GM12878 (cell line): ENCODE measurements at regions of chr16 and their contacts with region 1.

Region 1: DNA sequence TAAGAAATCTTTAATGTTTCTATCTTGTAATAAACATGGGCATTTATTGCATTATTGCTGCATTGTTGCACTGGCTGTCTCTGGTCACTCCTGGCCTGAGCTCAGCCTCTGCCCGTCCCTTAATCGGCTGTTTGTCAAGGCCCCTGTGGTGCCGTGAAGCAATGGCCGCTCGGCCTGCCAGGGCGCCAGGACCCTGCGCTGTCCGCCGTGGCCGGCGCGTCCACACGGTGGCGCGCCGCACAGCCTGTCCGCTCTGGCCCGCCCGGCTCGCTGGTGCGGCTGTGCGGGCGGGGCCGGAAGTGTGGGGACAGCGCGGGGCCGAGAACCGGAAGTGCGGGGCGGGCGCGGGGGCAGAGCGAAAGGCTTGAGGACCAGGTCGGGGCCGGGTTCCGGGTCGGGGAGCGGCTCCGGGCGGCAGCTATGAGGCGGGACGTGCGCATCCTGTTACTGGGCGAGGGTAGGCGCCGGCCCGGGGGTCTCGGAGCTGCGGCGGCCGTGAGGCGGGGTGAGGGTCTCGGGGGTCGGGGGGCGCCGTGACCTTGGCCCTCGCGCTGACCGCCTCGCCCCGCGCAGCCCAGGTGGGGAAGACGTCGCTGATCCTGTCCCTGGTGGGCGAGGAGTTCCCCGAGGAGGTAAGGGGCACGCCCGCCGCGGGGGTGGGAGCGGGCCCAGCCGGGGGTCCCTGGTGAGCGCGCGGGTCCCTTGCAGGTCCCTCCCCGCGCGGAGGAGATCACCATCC is at the start of gene RHOT2:
- DNase-seq: peak; percentile 48
- ATAC-seq: peak; percentile 99
- H3K4me3 ChIP-seq: peak within 1 kb of the TSS; percentile 90
- H3K27ac ChIP-seq: peak within 1 kb of the TSS; percentile 73
- H3K4me1 ChIP-seq: peaks cover 2% of the 10 kb centered on the region; the same call in 1 of the 2 replicates
- H3K27me3 ChIP-seq: no peaks in the 10 kb centered on the region
- CTCF ChIP-seq: peak; percentile 72 to 95 (median 93); a peak in 5 of 6 replicates
- EP300 ChIP-seq: no peak; a peak in 1 of 4 replicates
- POLR2A ChIP-seq: peak; percentile 95
- RAD21 ChIP-seq: no peak
- polyA plus RNA-seq, gene RHOT2: 3.7 to 5.6 TPM

Region 2: GRCh38 chr16:391885-392335 is 276.0 kb before region 1 on chr16:
- CTCF ChIA-PET with region 1: no interaction called
- POLR2A ChIA-PET with region 1: no interaction called
- RAD21 ChIA-PET with region 1: no interaction called
- SMC1A ChIA-PET with region 1: no interaction called
- in situ Hi-C with region 1: loop called (anchors 10 kb)
- intact Hi-C with region 1: loop called (anchors 10 kb)
- DNase-seq: no peak
- ATAC-seq: peak; percentile 91
- H3K4me3 ChIP-seq: no peak overlapping the region
- H3K27ac ChIP-seq: no peak overlapping the region
- H3K4me1 ChIP-seq: peaks cover 8% of the 10 kb centered on the region; the same call in 1 of the 2 replicates
- H3K27me3 ChIP-seq: no peaks in the 10 kb centered on the region
- CTCF ChIP-seq: peak; percentile 66 to 85 (median 82)
- EP300 ChIP-seq: no peak
- POLR2A ChIP-seq: no peak
- RAD21 ChIP-seq: peak; percentile 77

Region 3: DNA sequence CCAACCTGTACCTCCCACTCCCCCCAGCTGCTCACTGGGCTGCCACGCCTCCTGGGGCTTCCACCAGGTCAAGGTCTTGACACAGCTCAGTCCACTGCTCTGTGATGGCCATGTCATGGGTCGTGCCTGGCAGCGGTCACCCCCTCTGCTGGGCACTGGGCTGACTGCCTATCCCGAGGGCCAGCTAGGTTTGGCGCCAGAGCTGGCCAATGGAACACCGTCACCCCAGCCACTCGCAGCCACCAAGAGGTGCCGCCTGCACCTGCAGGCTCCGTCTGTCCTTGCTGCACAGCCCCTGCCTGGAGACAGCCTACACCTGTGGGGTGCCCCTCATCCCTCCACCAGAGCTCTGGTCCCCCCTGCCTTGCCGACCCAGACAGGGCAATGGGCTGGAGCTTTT is 82.6 kb before region 1 on chr16:
- CTCF ChIA-PET with region 1: no interaction called
- POLR2A ChIA-PET with region 1: no interaction called
- RAD21 ChIA-PET with region 1: no interaction called
- SMC1A ChIA-PET with region 1: no interaction called
- in situ Hi-C with region 1: no loop called
- intact Hi-C with region 1: no loop called
- DNase-seq: no peak
- ATAC-seq: no peak
- H3K4me3 ChIP-seq: no peak overlapping the region
- H3K27ac ChIP-seq: no peak overlapping the region
- H3K4me1 ChIP-seq: peaks cover 6% of the 10 kb centered on the region
- H3K27me3 ChIP-seq: no peaks in the 10 kb centered on the region
- CTCF ChIP-seq: no peak
- EP300 ChIP-seq: no peak
- POLR2A ChIP-seq: no peak
- RAD21 ChIP-seq: no peak

Region 4: GRCh38 chr16:648781-649589 is 19.0 kb before region 1 on chr16 and contains the start of gene WDR90:
- CTCF ChIA-PET with region 1: interaction called, 11 read pairs
- POLR2A ChIA-PET with region 1: interaction called, 3 read pairs
- RAD21 ChIA-PET with region 1: no interaction called
- SMC1A ChIA-PET with region 1: no interaction called
- in situ Hi-C with region 1: no loop called
- intact Hi-C with region 1: no loop called
- DNase-seq: peak; percentile 61
- ATAC-seq: peak; percentile 93
- H3K4me3 ChIP-seq: peak within 1 kb of the TSS; percentile 70
- H3K27ac ChIP-seq: peak within 1 kb of the TSS; percentile 80
- H3K4me1 ChIP-seq: peaks cover 9% of the 10 kb centered on the region
- H3K27me3 ChIP-seq: no peaks in the 10 kb centered on the region
- CTCF ChIP-seq: no peak
- EP300 ChIP-seq: no peak
- POLR2A ChIP-seq: peak; percentile 84
- RAD21 ChIP-seq: no peak
- polyA plus RNA-seq, gene WDR90: 2.0 to 5.9 TPM